CD8-positive, alpha-beta T cell (primary cell): ENCODE measurements at regions of chr5 and their contacts with region 1.

Region 1: DNA sequence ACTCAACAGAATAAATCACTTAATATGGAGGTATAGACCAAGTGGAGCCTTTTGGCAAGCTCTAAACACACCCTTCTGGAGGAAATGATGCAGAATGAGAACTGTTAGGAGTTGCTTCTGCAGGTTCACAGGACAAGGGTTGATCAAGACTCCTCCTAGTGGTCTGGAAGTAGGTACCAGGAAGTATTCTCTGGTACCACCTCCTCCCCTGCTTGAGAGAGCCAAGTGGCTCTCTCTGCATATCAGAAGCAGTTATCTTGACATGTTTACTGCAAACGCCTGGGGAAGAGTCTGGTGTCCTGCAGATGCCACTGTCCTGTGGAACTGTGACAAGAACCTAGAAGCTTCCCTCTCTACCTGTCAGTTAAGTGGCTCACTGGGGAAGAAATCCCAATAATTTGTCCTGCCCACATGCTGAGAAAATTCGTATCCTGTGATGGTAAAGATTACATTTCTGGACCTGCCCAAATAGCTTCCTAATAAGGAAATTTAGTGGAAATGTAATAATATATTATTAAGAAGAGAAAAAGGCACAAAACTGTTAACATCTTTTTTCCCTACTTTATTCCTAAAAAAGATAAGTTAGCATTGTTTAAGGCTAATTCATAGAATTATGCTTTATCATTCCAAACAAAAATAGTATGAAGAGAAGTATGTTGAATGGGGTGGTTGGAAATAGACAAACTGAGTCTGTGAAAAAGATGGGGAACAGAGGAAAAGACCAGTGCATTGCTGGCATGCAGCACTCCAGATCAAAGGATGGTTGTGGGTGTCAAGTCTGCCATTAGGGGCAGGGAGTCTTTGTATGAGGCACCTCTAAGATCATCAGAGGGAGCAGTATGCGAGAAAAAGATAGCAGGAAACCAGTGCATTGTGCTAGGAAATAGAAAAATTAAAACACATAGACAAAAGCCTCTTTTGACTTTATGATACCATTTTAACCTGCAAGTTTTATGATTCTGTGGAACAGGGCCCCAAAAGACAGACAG is 118.8 kb downstream of the CDC42SE2 start:
- DNase-seq: peak; percentile 29 to 93 (median 50)
- ATAC-seq: peak; percentile 65
- H3K4me3 ChIP-seq: peak overlapping the region in 1 of 2 experiments; percentile 13
- H3K4me3 Mint-ChIP-seq: peak overlapping the region; percentile 53
- H3K27ac ChIP-seq: peak overlapping the region; percentile 11 to 99
- H3K27ac Mint-ChIP-seq: peak overlapping the region; percentile 97
- H3K4me1 ChIP-seq: peaks cover 88% of the 10 kb centered on the region
- H3K4me1 Mint-ChIP-seq: peaks cover 93% of the 10 kb centered on the region
- H3K27me3 ChIP-seq: no peaks in the 10 kb centered on the region
- H3K27me3 Mint-ChIP-seq: no peaks in the 10 kb centered on the region
- CTCF ChIP-seq: peak; percentile 66

Region 2: GRCh38 chr5:131165119-131165727 is 217.5 kb before region 1 on chr5 and contains the start of gene HINT1:
- CTCF ChIA-PET with region 1: interaction called, 11 read pairs
- POLR2A ChIA-PET with region 1: interaction called, 6 read pairs
- intact Hi-C with region 1: loop called in 1 of 2 experiments (anchors 1 kb)
- DNase-seq: peak; percentile 81 to 96 (median 93)
- ATAC-seq: peak; percentile 83
- H3K4me3 ChIP-seq: peak within 1 kb of the TSS; percentile 85 to 90
- H3K4me3 Mint-ChIP-seq: peak within 1 kb of the TSS; percentile 95
- H3K27ac ChIP-seq: peak within 1 kb of the TSS; percentile 85 to 91
- H3K27ac Mint-ChIP-seq: peak within 1 kb of the TSS; percentile 98
- H3K4me1 ChIP-seq: peaks cover 40% of the 10 kb centered on the region
- H3K4me1 Mint-ChIP-seq: peaks cover 49% of the 10 kb centered on the region
- H3K27me3 ChIP-seq: no peaks in the 10 kb centered on the region
- H3K27me3 Mint-ChIP-seq: no peaks in the 10 kb centered on the region
- CTCF ChIP-seq: no peak
- total RNA-seq, gene HINT1: 243 to 252 TPM

Region 3: DNA sequence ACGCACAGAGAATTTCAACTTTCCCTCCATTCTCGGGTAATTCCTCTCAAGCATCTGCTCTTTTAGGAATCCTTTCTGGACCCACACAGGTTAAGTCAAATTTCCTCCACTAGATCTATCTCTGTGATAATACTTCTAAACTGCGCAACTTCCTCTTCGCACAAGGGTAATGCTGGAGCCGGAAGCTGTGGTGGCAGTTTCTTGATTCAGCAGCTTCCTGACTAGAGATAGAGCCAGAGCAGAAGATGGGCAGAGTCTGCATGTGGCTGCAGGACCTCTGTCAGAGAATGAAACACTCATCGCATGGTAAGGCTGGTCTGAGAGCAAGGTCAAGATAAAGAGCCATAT is 129.9 kb before region 1 on chr5:
- CTCF ChIA-PET with region 1: interaction called, 10 read pairs
- POLR2A ChIA-PET with region 1: interaction called, 7 read pairs
- intact Hi-C with region 1: loop called in 1 of 2 experiments (anchors 5 kb)
- DNase-seq: peak; percentile 63 to 95 (median 82)
- ATAC-seq: peak; percentile 75
- H3K4me3 ChIP-seq: peak overlapping the region; percentile 41 to 53
- H3K4me3 Mint-ChIP-seq: peak overlapping the region; percentile 94
- H3K27ac ChIP-seq: peak overlapping the region; percentile 55 to 89
- H3K27ac Mint-ChIP-seq: peak overlapping the region; percentile 95
- H3K4me1 ChIP-seq: peaks cover 60% of the 10 kb centered on the region
- H3K4me1 Mint-ChIP-seq: peaks cover 73% of the 10 kb centered on the region
- H3K27me3 ChIP-seq: no peaks in the 10 kb centered on the region
- H3K27me3 Mint-ChIP-seq: no peaks in the 10 kb centered on the region
- CTCF ChIP-seq: no peak

Region 4: GRCh38 chr5:131263648-131264450 is 118.9 kb before region 1 on chr5 and contains the start of gene CDC42SE2:
- CTCF ChIA-PET with region 1: interaction called, 87 read pairs
- POLR2A ChIA-PET with region 1: interaction called, 95 read pairs
- intact Hi-C with region 1: loop called in 1 of 2 experiments (anchors 1 kb)
- DNase-seq: peak; percentile 77 to 96 (median 86)
- ATAC-seq: peak; percentile 83
- H3K4me3 ChIP-seq: peak within 1 kb of the TSS; percentile 93 to 98
- H3K4me3 Mint-ChIP-seq: peak within 1 kb of the TSS; percentile 87
- H3K27ac ChIP-seq: peak within 1 kb of the TSS; percentile 90 to 93
- H3K27ac Mint-ChIP-seq: peak within 1 kb of the TSS; percentile 95
- H3K4me1 ChIP-seq: peaks cover 42% of the 10 kb centered on the region
- H3K4me1 Mint-ChIP-seq: peaks cover 56% of the 10 kb centered on the region
- H3K27me3 ChIP-seq: no peaks in the 10 kb centered on the region
- H3K27me3 Mint-ChIP-seq: no peaks in the 10 kb centered on the region
- CTCF ChIP-seq: no peak
- total RNA-seq, gene CDC42SE2: 340 to 348 TPM

Region 5: GRCh38 chr5:131328536-131329285 is 54.0 kb before region 1 on chr5:
- CTCF ChIA-PET with region 1: interaction called, 4 read pairs
- POLR2A ChIA-PET with region 1: no interaction called
- intact Hi-C with region 1: loop called in 1 of 2 experiments (anchors 5 kb)
- DNase-seq: peak in 1 of 9 experiments; percentile 36
- ATAC-seq: peak; percentile 30
- H3K4me3 ChIP-seq: no peak overlapping the region
- H3K4me3 Mint-ChIP-seq: peak overlapping the region; percentile 35
- H3K27ac ChIP-seq: peak overlapping the region in 1 of 2 experiments; percentile 13
- H3K27ac Mint-ChIP-seq: peak overlapping the region; percentile 82
- H3K4me1 ChIP-seq: peaks cover 67% of the 10 kb centered on the region
- H3K4me1 Mint-ChIP-seq: peaks cover 82% of the 10 kb centered on the region
- H3K27me3 ChIP-seq: no peaks in the 10 kb centered on the region
- H3K27me3 Mint-ChIP-seq: no peaks in the 10 kb centered on the region
- CTCF ChIP-seq: no peak

Region 6: GRCh38 chr5:131357739-131358561 is 24.8 kb before region 1 on chr5:
- CTCF ChIA-PET with region 1: interaction called, 8 read pairs
- POLR2A ChIA-PET with region 1: interaction called, 7 read pairs
- intact Hi-C with region 1: loop called (anchors 2 kb)
- DNase-seq: peak in 2 of 9 experiments; percentile 46 to 65
- ATAC-seq: peak; percentile 46
- H3K4me3 ChIP-seq: no peak overlapping the region
- H3K4me3 Mint-ChIP-seq: peak overlapping the region; percentile 33
- H3K27ac ChIP-seq: peak overlapping the region; percentile 1 to 63
- H3K27ac Mint-ChIP-seq: peak overlapping the region; percentile 86
- H3K4me1 ChIP-seq: peaks cover 57% of the 10 kb centered on the region
- H3K4me1 Mint-ChIP-seq: peaks cover 75% of the 10 kb centered on the region
- H3K27me3 ChIP-seq: no peaks in the 10 kb centered on the region
- H3K27me3 Mint-ChIP-seq: no peaks in the 10 kb centered on the region
- CTCF ChIP-seq: no peak

Region 7: GRCh38 chr5:131394128-131394527 is 11.4 kb after region 1 on chr5:
- CTCF ChIA-PET with region 1: interaction called, 8 read pairs
- POLR2A ChIA-PET with region 1: interaction called, 7 read pairs
- intact Hi-C with region 1: loop called in 1 of 2 experiments (anchors 1 kb)
- DNase-seq: peak in 6 of 9 experiments; percentile 24 to 92 (median 47)
- ATAC-seq: peak; percentile 87
- H3K4me3 ChIP-seq: no peak overlapping the region
- H3K4me3 Mint-ChIP-seq: peak overlapping the region; percentile 52
- H3K27ac ChIP-seq: peak overlapping the region; percentile 50 to 85
- H3K27ac Mint-ChIP-seq: peak overlapping the region; percentile 89
- H3K4me1 ChIP-seq: peaks cover 66% of the 10 kb centered on the region
- H3K4me1 Mint-ChIP-seq: peaks cover 86% of the 10 kb centered on the region
- H3K27me3 ChIP-seq: no peaks in the 10 kb centered on the region
- H3K27me3 Mint-ChIP-seq: no peaks in the 10 kb centered on the region
- CTCF ChIP-seq: no peak